A673 (cell line): ENCODE measurements at regions of chr18 and their contacts with region 1.

Region 1: DNA sequence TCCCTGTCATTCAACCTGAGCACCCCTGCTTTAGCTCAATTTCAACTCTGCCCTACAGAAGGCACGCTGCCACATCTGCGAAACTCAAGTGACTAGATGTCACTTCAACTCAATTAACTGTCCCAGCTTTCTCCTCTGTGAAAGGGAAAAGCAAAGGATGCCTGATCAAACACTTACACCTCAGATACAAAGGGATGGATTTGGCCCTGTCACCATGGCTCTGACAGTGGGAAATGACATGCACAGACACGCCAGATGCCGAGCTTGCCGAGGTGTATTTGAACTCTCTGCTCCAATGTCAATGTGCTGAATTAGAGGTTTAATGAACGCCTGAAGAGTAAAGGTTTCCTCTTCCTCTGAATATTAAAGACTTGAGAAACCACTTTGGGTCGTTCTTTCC is 481.1 kb downstream of the CBLN2 start:
- DNase-seq: no peak
- H3K4me3 ChIP-seq: no peak overlapping the region
- H3K27ac ChIP-seq: no peak overlapping the region
- H3K4me1 ChIP-seq: no peaks in the 10 kb centered on the region
- H3K27me3 ChIP-seq: no peaks in the 10 kb centered on the region
- CTCF ChIP-seq: no peak

Region 2: DNA sequence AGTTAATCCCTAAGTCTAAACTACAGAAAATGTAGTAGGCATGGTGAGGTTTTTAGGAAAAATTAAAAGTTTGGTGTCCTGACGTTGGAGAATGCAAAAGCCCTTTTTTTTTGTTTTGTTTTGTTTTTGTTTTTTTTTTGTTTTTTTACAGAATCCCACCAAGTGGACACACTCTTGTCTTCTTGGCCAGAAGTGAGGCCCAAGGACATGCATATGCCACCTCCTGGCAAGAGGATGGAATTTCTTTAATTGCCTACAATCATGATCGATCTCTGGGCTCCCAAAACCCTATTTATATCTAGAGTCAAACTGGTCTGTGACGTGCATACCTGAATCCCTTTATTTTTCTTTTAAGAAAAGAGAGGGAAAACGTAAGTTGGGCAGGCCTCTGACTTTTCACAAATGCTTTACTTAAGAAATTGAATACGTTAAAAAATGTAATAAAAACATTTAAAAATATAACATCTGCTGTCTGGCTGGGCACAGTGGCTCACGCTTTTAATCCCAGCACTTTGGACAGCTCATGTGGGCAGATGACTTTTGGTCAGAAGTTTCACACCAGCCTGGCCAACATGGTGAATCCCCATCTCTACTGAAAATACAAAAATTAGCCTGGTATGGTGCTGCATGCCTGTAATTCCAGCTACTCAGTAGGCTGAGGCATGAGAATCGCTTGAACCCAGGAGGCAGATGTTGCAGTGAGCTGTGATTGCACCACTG is 21.5 kb before region 1 on chr18:
- CTCF ChIA-PET with region 1: no interaction called
- POLR2A ChIA-PET with region 1: no interaction called
- intact Hi-C with region 1: loop called (anchors 2 kb)
- DNase-seq: no peak
- H3K4me3 ChIP-seq: no peak overlapping the region
- H3K27ac ChIP-seq: no peak overlapping the region
- H3K4me1 ChIP-seq: no peaks in the 10 kb centered on the region
- H3K27me3 ChIP-seq: no peaks in the 10 kb centered on the region
- CTCF ChIP-seq: peak; percentile 30; the same call in 1 of the 2 replicates